ENCODE measurements at regions of chr10 and their contacts with region 1.

Region 1: GRCh38 chr10:102583435-102584417 is 60.6 kb upstream of the TRIM8 start:
- DNase-seq: peak; percentile 73
- H3K4me3 Mint-ChIP-seq: no peak overlapping the region
- H3K27ac Mint-ChIP-seq: no peak overlapping the region
- H3K4me1 Mint-ChIP-seq: peaks cover 3% of the 10 kb centered on the region
- H3K27me3 Mint-ChIP-seq: no peaks in the 10 kb centered on the region

Region 2: GRCh38 chr10:102225646-102226541 is 357.8 kb before region 1 on chr10 and contains the start of gene ELOVL3:
- intact Hi-C with region 1: loop called (anchors 5 kb)
- DNase-seq: peak; percentile 86
- H3K4me3 Mint-ChIP-seq: peak within 1 kb of the TSS; percentile 59
- H3K27ac Mint-ChIP-seq: no peak within 1 kb of the TSS
- H3K4me1 Mint-ChIP-seq: peaks cover 23% of the 10 kb centered on the region
- H3K27me3 Mint-ChIP-seq: peaks cover 47% of the 10 kb centered on the region
- total RNA-seq, gene ELOVL3: not detected in 2 replicates

Region 3: GRCh38 chr10:102476466-102477141 is 107.1 kb before region 1 on chr10:
- intact Hi-C with region 1: loop called (anchors 5 kb)
- DNase-seq: no peak
- H3K4me3 Mint-ChIP-seq: no peak overlapping the region
- H3K27ac Mint-ChIP-seq: no peak overlapping the region
- H3K4me1 Mint-ChIP-seq: peaks cover 12% of the 10 kb centered on the region
- H3K27me3 Mint-ChIP-seq: no peaks in the 10 kb centered on the region

Region 4: DNA sequence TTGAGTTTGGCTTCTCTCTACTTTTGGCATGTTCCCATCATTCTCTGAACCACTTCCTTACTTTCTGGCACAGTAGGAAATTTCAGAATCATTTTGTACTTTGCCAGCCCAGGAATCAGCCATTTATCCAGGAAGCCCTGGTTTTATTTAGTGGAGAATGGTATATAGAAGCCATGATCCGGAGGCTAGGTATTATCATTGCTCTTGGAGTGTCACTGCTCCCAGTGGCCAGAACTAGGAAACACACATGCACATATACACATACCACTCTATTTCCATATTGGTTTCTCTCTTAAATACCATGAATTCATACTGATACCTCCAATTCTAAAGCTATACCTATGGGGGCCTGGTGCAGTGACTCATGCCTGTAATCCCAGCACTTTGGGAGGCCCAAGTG is 43.7 kb before region 1 on chr10:
- intact Hi-C with region 1: no loop called
- DNase-seq: no peak
- H3K4me3 Mint-ChIP-seq: no peak overlapping the region
- H3K27ac Mint-ChIP-seq: no peak overlapping the region
- H3K4me1 Mint-ChIP-seq: peaks cover 5% of the 10 kb centered on the region
- H3K27me3 Mint-ChIP-seq: no peaks in the 10 kb centered on the region

Region 5: GRCh38 chr10:102565793-102566192 is 17.9 kb before region 1 on chr10:
- intact Hi-C with region 1: no loop called
- DNase-seq: no peak
- H3K4me3 Mint-ChIP-seq: no peak overlapping the region
- H3K27ac Mint-ChIP-seq: no peak overlapping the region
- H3K4me1 Mint-ChIP-seq: no peaks in the 10 kb centered on the region
- H3K27me3 Mint-ChIP-seq: no peaks in the 10 kb centered on the region

Measured in activated T-helper 2 cell treated with anti-CD3 and anti-CD28 coated beads, Interferon-gamma antibody, Interleukin-2, Interleukin-4, amounts not matched to agents 10 μg/mL and 5 μg/mL and 100 μg/mL, durations not matched to agents 14 hours and 24 hours and 36 hours (primary cell).